Activated CD4-positive, alpha-beta T cell treated with anti-CD3 and anti-CD28 coated beads, Interleukin-2, amount 10 ng/mL, durations not matched to agents 7 days and 5 days (primary cell): ENCODE measurements at regions of chr6 and their contacts with region 1.

Region 1: DNA sequence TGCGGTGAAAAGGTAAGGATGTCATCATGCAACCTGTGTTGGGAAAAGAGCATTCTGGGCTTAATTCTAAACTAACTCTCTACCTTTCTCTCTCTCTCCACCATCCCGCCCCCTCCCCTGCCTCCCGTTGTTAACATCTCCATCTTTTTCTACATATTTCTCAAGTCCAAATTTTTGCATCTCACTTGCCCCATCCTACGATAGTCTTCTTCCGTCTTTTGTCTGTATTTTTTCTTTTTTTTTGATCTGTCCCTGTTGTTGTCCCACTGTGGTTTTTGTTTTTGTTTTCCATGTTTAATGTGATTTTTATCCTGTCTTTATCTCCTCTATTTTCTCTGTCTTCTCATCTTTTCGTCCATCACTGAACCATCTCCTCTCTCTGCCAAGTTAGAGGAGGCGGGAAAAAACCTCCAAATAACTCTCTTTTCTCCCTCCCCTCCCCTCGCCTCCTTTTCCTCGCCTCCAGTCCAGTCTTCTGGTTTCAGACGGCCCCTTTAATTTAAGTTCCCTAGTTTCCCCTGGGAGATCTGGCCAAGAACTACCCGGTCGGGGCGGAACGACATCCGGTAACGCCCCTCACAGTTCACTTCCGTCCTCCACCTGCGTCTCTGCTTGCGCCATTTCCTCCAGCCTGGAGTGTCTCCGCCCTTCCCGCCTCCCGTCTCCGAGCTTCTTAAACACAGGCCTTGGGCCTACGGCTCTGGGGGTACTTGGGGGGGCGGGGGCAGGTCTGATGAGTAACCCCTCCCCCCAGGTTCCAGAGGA is at the start of gene NFKBIL1:
- DNase-seq: peak; percentile 94
- H3K4me3 Mint-ChIP-seq: peak within 1 kb of the TSS; percentile 89
- H3K27ac Mint-ChIP-seq: peak within 1 kb of the TSS; percentile 95
- H3K4me1 Mint-ChIP-seq: peaks cover 64% of the 10 kb centered on the region
- H3K27me3 Mint-ChIP-seq: no peaks in the 10 kb centered on the region
- total RNA-seq, gene NFKBIL1: 15.8 to 16.0 TPM

Region 2: DNA sequence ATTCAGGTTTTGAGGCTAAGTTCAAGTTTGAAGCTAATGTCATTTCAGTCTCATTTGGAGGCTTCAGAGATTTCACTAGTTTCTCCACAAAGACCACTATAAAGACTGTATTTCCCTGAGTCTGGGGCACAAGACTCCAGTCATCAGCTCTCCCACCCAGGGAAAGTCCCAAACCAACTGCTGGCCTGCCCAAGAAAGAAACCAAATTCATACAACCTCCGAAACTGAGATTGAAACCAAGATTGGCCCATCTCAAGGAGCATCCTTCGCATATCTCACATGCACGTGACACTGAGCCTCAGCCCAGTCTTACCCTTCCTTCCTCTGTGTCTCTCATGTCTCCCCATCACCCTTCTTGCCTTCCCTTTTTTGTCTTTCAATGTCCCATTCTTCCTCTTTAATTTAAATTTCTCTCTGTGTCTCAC is 21.4 kb after region 1 on chr6:
- CTCF ChIA-PET with region 1: interaction called, 48 read pairs
- POLR2A ChIA-PET with region 1: no interaction called
- DNase-seq: peak; percentile 87
- H3K4me3 Mint-ChIP-seq: peak overlapping the region; percentile 3
- H3K27ac Mint-ChIP-seq: peak overlapping the region; percentile 75
- H3K4me1 Mint-ChIP-seq: peaks cover 74% of the 10 kb centered on the region
- H3K27me3 Mint-ChIP-seq: peaks cover 21% of the 10 kb centered on the region

Region 3: GRCh38 chr6:31580807-31581433 is 33.8 kb after region 1 on chr6:
- CTCF ChIA-PET with region 1: interaction called, 111 read pairs
- POLR2A ChIA-PET with region 1: interaction called, 13 read pairs
- DNase-seq: peak; percentile 88
- H3K4me3 Mint-ChIP-seq: peak overlapping the region; percentile 94
- H3K27ac Mint-ChIP-seq: peak overlapping the region; percentile 94
- H3K4me1 Mint-ChIP-seq: peaks cover 73% of the 10 kb centered on the region
- H3K27me3 Mint-ChIP-seq: no peaks in the 10 kb centered on the region

Region 4: DNA sequence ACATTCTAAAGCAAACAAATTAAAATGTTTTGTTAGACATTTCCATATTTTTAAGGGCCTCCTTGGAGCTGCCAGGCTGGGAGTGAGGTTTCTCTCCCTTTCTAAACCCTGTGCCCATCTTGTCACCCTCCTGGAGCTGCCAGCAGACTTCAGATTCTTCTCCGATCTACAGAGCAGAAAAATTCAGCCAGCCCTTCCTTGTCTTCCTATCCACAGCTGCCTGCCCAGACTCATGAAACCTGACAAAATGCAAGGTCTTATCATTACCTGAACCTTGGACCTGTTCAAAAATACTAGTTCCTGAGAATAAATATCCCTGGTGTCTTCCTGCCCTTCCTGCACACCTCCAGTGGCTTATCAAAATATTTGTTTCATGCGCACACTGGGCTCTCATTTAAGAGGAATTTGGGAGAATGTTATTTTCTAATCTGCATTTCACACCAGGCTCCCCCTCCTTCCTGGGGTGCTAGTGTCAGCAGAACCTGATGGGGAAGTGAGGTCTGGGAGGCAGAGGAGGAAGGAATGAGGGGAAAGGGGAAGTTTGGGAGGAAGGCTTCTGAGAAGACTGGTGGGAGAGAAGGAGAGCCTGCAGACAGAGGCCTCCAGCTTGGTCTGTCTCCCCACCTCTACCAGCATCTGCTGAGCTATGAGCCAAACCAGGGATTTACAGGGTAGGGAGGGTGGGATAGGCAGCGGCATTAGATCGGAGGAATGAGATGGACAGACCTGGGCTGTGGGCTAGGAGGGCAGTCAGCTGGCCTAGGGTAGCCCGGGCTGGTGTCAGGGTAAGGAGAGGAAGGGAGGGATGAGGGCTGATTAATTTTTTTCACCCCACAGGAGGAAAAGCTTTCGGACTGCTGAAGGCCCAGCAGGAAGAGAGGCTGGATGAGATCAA is 67.8 kb after region 1 on chr6 and contains the start of gene AIF1:
- CTCF ChIA-PET with region 1: interaction called, 16 read pairs
- POLR2A ChIA-PET with region 1: no interaction called
- DNase-seq: no peak
- H3K4me3 Mint-ChIP-seq: peak within 1 kb of the TSS; percentile 71
- H3K27ac Mint-ChIP-seq: peak within 1 kb of the TSS; percentile 86
- H3K4me1 Mint-ChIP-seq: peaks cover 40% of the 10 kb centered on the region
- H3K27me3 Mint-ChIP-seq: no peaks in the 10 kb centered on the region
- total RNA-seq, gene AIF1: 48.0 to 54.2 TPM